Psoas muscle (tissue), 8 donors: ENCODE measurements at regions of chr14 and their contacts with region 1.

Region 1: GRCh38 chr14:103808403-103809001 is 38.9 kb downstream of the PPP1R13B start:
- DNase-seq: peak; percentile 69 to 82
- ATAC-seq: peak; percentile 76 to 93 (median 90)
- H3K4me3 ChIP-seq: no peak overlapping the region
- H3K27ac ChIP-seq: no peak overlapping the region
- H3K4me1 ChIP-seq: no peaks in the 10 kb centered on the region
- H3K27me3 ChIP-seq: no peaks in the 10 kb centered on the region
- CTCF ChIP-seq: peak; percentile 96

Region 2: DNA sequence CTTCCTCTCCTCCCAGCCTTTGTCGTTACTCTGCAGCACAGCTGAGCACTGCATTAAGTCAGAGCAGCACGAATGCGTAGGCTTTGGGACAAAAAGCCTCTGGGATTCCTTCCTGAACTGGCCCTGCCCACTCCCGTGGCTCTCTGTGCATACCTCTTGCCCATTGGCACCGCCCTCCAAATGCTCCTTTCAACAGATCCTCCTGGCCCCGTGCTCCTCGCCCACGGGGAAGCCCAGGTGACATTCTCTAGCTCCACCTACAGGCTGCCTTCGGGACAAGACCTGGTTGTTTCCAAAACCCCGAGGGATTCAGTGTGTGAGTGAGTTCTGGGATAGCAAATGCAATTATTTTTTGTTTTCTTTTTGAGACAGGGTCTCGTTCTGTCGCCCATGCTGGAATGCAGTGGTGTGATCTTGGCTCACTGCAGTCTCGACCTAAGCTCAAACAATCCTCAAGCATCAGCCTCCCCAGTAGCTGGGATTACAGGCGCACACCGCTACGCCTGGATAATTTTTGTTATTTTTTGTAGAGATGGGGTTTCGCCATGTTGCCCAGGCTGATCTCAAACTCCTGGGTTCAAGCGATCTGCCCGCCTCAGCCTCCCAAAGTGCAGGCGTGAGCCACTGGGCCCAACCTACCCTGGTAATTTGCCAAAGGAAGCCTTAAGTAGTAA is 101.9 kb after region 1 on chr14:
- intact Hi-C with region 1: loop called (anchors 2 to 5 kb)
- DNase-seq: peak; percentile 71 to 81
- ATAC-seq: peak; percentile 93 to 95 (median 94)
- H3K4me3 ChIP-seq: no peak overlapping the region
- H3K27ac ChIP-seq: no peak overlapping the region
- H3K4me1 ChIP-seq: no peaks in the 10 kb centered on the region
- H3K27me3 ChIP-seq: no peaks in the 10 kb centered on the region
- CTCF ChIP-seq: peak; percentile 76

Region 3: GRCh38 chr14:103973354-103973753 is 164.9 kb after region 1 on chr14:
- intact Hi-C with region 1: loop called in 1 of 2 experiments (anchors 5 kb)
- DNase-seq: no peak
- ATAC-seq: no peak
- H3K4me3 ChIP-seq: no peak overlapping the region
- H3K27ac ChIP-seq: no peak overlapping the region
- H3K4me1 ChIP-seq: no peaks in the 10 kb centered on the region
- H3K27me3 ChIP-seq: no peaks in the 10 kb centered on the region
- CTCF ChIP-seq: no peak

Region 4: DNA sequence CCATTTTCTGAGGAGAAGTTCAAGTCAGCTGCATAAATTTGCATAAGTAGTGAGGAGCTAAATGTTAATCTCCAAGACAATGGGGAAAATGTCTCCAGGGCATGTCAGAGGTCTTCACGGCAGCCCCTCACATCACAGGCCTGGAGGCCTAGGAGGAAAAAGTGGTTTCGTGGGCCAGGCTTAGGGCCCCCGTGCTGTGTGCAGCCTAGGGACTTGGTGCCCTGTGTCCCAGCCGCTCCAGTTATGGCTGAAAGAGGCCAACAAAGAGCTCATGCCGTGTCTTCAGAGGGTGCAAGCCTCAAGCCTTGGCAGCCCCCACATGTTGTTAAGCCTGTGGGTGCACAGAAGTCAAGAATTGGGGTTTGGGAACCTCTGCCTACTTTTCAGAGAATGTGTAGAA is 175.7 kb after region 1 on chr14:
- intact Hi-C with region 1: loop called (anchors 1 to 5 kb)
- DNase-seq: no peak
- ATAC-seq: no peak
- H3K4me3 ChIP-seq: no peak overlapping the region
- H3K27ac ChIP-seq: no peak overlapping the region
- H3K4me1 ChIP-seq: no peaks in the 10 kb centered on the region
- H3K27me3 ChIP-seq: peaks cover 0 to 7% (median 0%) of the 10 kb centered on the region in 3 donors
- CTCF ChIP-seq: no peak